ENCODE measurements at regions of chr15 and their contacts with region 1.

Region 1: GRCh38 chr15:35444557-35445204 is 101.3 kb downstream of the DPH6 start:
- H3K4me3 Mint-ChIP-seq: no peak overlapping the region
- H3K27ac Mint-ChIP-seq: no peak overlapping the region
- H3K4me1 Mint-ChIP-seq: no peaks in the 10 kb centered on the region
- H3K27me3 Mint-ChIP-seq: no peaks in the 10 kb centered on the region

Region 2: DNA sequence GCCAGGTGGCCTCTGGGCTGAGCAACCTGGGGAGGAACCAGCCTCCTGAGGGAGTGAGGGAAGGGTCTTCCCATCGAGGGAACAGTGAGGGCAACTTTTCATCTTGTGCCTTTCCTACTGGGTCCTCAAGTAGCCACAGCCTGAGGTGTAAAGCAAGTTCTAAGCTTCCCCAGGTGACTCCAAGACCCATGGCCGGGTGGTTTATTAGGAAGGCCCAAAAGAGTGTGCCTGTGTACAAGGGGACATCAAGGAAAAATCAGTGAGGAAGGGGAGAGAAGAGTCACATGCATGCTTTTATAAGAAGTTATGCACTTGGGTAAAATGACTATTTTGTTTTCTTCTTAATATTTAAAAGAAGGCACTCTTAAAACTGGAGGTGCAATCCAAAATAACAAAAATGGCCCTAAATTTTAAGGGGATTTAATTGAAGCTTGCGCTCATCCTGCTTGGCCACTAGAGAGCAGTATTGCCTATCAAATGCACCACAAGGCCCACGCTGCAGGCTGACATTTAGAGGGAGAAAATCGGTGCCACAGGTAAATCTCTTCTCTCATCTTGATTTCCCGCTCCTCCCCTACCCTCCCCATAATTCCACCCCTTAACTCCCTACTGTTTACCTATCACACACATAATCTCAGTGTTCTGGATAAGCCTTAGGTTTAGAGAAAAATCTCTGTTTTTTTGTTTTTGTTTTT is 366.3 kb before region 1 on chr15:
- intact Hi-C with region 1: loop called (anchors 1 kb)
- H3K4me3 Mint-ChIP-seq: no peak overlapping the region
- H3K27ac Mint-ChIP-seq: no peak overlapping the region
- H3K4me1 Mint-ChIP-seq: no peaks in the 10 kb centered on the region
- H3K27me3 Mint-ChIP-seq: peaks cover 2% of the 10 kb centered on the region

Region 3: DNA sequence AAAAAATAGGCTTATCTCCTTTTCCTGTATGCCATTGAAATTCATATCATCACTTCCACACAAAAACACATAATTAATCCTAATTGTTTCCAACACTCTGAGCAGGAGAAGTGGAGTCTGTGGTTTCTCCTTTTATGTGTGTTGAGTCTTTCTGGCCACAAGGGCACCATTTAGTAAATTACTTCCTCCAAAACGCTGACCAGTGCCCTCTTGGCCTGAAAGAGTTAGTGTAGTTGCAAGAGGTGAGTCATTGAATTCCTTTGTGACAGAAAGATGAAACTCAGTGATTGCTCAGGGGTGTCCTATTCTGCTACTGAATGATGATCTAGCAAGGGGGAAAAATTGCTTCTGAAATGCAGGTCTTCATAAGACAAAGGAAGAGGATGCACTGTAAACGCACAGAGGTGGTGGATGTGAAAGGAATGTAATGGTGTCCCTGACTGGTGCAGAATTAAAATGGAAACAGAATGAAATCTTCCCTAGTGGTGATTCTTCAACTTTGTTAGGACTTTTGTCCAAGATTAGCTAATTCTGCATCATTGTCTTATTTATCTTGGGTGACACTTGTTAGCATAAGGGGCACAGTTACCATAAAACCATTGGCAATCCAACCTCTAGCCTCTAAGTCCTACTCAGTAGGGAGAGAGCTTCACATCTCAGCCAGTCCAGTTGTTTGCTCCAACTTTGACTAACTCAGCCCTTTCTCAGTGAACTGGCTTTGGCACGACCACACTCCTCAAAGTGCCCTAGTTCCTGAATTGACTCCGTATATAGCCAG is 151.1 kb before region 1 on chr15:
- intact Hi-C with region 1: loop called (anchors 5 kb)
- H3K4me3 Mint-ChIP-seq: no peak overlapping the region
- H3K27ac Mint-ChIP-seq: no peak overlapping the region
- H3K4me1 Mint-ChIP-seq: no peaks in the 10 kb centered on the region
- H3K27me3 Mint-ChIP-seq: no peaks in the 10 kb centered on the region